ENCODE measurements at regions of chr3 and their contacts with region 1.

Region 1: DNA sequence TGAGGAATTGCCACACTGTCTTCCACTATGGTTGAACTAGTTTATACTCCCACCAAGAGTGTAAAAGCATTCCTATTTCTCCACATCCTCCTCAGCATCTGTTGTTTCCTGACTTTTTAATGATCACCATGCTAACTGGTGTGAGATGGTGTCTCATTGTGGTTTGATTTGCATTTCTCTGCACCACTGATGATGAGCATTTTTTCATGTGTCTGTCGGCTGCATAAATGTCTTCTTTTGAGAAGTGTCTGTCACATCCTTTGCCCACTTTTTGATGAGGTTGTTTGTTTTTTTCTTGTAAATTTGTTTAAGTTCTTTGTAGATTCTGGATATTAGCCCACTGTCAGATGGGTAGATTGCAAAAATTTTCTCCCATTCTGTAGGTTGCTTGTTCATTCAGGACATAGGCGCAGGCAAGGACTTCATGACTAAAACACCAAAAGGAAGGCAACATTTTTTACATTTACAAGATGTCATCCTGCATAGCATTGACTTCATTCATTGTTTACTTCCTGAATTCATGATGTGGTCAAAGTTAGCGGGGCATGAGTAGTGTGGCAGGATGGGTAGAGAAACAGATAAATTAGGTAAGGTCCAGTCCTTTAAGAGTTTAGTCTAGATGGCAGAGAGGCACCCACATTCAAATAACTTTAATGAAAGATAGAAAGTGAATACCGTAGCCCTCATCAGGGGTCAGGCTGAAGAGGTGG is 45.1 kb upstream of the LPP start:
- DNase-seq: no peak
- ATAC-seq: peak; percentile 73
- H3K4me3 Mint-ChIP-seq: peak overlapping the region; percentile 42
- H3K27ac Mint-ChIP-seq: peak overlapping the region; percentile 78
- H3K4me1 Mint-ChIP-seq: peaks cover 26% of the 10 kb centered on the region
- H3K27me3 Mint-ChIP-seq: no peaks in the 10 kb centered on the region
- CTCF ChIP-seq: no peak

Region 2: GRCh38 chr3:187434524-187434923 is 674.3 kb before region 1 on chr3:
- CTCF ChIA-PET with region 1: no interaction called
- POLR2A ChIA-PET with region 1: no interaction called
- intact Hi-C with region 1: no loop called
- DNase-seq: no peak
- ATAC-seq: no peak
- H3K4me3 Mint-ChIP-seq: no peak overlapping the region
- H3K27ac Mint-ChIP-seq: no peak overlapping the region
- H3K4me1 Mint-ChIP-seq: no peaks in the 10 kb centered on the region
- H3K27me3 Mint-ChIP-seq: peaks cover 13% of the 10 kb centered on the region
- CTCF ChIP-seq: no peak

Region 3: DNA sequence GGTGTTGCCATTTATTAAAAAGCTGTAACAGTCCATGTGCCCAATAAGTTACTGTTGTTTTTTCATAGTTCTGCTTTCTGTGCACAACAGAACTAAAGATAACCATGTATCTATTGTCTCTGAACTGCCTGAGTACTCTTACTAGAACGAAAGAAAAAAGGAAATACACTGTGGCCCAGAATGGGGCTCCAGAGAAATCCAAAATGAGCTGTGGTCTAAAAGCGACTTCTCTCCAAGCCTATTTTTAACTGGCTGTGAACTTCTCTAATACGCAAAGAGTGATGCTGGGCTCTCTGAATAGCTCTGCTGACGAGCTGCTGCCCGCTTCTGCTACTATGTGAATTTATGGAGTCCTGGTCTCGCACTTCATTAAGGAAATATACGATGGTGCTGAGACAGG is 11.1 kb before region 1 on chr3:
- CTCF ChIA-PET with region 1: no interaction called
- POLR2A ChIA-PET with region 1: interaction called, 4 read pairs
- intact Hi-C with region 1: loop called (anchors 2 kb)
- DNase-seq: no peak
- ATAC-seq: peak; percentile 69
- H3K4me3 Mint-ChIP-seq: peak overlapping the region; percentile 50
- H3K27ac Mint-ChIP-seq: peak overlapping the region; percentile 11
- H3K4me1 Mint-ChIP-seq: peaks cover 16% of the 10 kb centered on the region
- H3K27me3 Mint-ChIP-seq: no peaks in the 10 kb centered on the region
- CTCF ChIP-seq: no peak

Region 4: DNA sequence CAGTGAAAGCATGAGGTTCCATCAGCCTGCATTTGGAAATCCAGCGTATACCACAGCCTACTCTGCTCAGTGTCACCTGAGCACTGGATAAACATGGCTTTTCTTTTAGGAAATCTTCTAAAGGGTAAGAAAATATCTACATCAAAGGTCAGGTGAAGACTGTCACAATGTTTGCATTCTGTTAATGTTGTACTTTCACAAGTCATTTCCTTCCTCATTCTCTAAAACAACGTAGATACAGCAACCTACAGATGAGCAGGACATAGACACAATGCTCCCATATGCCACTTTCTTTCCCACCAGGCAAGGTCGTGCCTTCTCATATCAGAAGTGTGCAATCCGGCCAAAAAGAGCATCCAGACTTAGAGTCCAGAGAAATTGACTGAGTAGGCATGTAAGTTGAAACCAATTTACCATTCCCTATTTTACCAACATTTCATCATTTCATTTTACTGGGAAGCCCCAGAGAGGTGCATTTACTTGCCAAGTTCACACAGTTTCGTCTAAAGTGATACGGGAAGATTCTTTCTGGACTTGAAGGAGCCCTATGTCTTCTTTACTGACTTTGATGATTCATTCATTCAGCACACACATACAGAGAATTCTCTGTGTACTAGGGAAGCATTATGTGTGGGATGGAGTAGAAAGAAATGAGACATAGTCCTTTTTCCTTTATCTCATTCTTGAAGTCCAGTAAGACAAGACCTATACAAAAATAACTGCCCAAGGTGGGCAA is 14.5 kb after region 1 on chr3:
- CTCF ChIA-PET with region 1: no interaction called
- POLR2A ChIA-PET with region 1: interaction called, 4 read pairs
- intact Hi-C with region 1: loop called (anchors 1 kb)
- DNase-seq: no peak
- ATAC-seq: peak; percentile 62
- H3K4me3 Mint-ChIP-seq: peak overlapping the region; percentile 32
- H3K27ac Mint-ChIP-seq: peak overlapping the region; percentile 51
- H3K4me1 Mint-ChIP-seq: peaks cover 22% of the 10 kb centered on the region
- H3K27me3 Mint-ChIP-seq: peaks cover 6% of the 10 kb centered on the region
- CTCF ChIP-seq: no peak

Region 5: DNA sequence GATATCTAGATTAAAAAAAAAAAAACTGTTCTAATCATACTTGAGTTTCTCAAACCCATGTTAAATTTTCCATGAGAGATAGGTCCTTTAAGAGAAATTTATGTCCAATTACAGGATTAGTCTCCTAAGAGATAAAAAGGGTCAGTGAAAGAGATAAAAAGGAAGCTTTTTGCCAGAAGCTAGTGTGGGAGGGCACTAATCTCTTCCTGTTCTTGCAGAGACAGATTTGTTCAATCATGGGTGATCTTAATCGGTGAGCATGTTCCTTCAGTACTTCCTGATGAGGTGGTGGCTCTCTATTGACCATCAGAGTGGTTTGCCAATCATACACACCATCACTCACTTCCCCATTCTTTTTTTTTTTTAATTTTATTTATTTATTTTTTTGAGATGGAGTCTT is 28.2 kb after region 1 on chr3:
- CTCF ChIA-PET with region 1: no interaction called
- POLR2A ChIA-PET with region 1: interaction called, 3 read pairs
- intact Hi-C with region 1: loop called (anchors 5 kb)
- DNase-seq: no peak
- ATAC-seq: peak; percentile 50
- H3K4me3 Mint-ChIP-seq: no peak overlapping the region
- H3K27ac Mint-ChIP-seq: no peak overlapping the region
- H3K4me1 Mint-ChIP-seq: peaks cover 23% of the 10 kb centered on the region
- H3K27me3 Mint-ChIP-seq: no peaks in the 10 kb centered on the region
- CTCF ChIP-seq: no peak